ENCODE measurements at regions of chr16 and their contacts with region 1.

Region 1: DNA sequence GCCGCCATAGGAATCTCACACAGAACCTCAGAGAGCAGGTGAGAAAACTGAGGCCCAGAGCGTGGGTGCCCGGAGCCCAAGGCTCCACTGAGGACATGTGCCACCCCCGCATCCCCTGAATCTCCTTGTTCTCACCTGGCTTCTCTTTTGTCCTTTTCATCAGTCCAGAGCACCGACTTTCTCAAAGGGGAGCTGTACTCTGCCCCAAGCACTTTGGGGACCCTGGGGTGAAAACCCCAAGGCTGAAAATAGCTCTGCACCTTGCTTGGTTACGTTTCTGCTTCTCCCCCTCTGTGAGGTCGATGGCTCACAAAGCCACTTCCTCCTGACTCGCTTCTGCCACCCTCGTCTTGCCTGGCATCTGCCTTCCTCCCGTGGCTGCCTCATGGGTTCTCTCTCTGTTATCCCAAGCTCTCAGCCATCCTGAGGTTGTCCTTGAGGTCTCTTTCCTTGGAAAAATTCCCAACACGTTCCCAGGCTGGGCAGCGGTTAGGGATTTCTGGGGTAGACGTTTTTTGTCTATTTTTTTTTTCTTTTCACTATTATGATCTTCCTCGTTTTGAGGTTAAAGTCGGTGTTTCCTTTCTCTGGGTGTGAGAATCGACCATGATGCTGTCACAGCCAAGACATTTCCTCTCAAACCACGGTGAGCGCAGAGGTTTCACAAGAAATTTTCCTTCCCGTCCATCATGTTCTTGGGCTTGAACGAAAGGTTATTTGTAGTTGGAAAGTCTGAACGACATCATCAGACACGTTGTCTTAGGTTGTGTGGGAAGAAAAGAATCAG is 37.2 kb downstream of the IRF8 start:
- DNase-seq: peak; percentile 62
- H3K4me3 Mint-ChIP-seq: peak overlapping the region; percentile 8
- H3K27ac Mint-ChIP-seq: peak overlapping the region; percentile 90
- H3K4me1 Mint-ChIP-seq: peaks cover 55% of the 10 kb centered on the region
- H3K27me3 Mint-ChIP-seq: peaks cover 3% of the 10 kb centered on the region

Region 2: DNA sequence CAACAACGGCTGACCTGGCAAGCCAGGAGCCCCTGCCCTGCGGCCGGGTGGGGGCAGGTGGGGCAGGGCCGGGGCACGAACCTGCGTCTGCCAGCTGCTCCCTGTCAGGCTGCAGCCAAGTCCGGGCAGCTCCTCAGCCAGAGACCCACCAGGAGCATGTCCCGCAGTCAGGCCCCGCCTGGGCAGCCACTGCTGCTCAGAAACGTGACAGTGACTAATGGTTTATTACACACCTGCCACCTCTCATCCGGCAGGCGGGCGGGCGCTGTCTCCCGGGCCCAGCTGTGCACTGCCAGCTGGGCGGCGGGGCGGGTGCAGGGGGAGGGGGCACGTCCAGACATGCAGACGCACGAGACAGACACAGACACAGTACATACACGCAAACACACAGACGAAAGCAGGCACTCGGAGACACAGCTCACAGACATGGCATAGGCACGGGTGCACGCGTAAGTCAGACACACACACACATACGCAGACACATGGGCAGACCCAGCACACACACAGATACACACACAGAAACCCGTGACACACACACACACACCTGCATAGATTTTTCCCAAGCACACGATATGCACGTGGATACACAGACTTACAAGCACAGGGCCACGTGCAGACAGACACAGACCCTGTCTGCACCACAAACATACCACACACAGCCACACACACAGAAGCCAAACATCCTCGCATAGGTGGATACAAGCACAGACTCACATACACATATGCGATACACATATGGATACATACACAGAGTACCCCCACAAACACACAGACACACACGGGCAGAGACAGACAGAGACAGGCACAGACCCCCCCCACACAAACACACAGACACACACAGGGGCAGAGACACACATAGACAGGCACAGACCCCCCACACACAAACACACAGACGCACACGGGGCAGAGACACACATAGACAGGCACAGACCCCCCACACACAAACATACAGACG is 575.6 kb before region 1 on chr16:
- intact Hi-C with region 1: no loop called
- DNase-seq: no peak
- H3K4me3 Mint-ChIP-seq: no peak overlapping the region
- H3K27ac Mint-ChIP-seq: no peak overlapping the region
- H3K4me1 Mint-ChIP-seq: no peaks in the 10 kb centered on the region
- H3K27me3 Mint-ChIP-seq: no peaks in the 10 kb centered on the region

Region 3: DNA sequence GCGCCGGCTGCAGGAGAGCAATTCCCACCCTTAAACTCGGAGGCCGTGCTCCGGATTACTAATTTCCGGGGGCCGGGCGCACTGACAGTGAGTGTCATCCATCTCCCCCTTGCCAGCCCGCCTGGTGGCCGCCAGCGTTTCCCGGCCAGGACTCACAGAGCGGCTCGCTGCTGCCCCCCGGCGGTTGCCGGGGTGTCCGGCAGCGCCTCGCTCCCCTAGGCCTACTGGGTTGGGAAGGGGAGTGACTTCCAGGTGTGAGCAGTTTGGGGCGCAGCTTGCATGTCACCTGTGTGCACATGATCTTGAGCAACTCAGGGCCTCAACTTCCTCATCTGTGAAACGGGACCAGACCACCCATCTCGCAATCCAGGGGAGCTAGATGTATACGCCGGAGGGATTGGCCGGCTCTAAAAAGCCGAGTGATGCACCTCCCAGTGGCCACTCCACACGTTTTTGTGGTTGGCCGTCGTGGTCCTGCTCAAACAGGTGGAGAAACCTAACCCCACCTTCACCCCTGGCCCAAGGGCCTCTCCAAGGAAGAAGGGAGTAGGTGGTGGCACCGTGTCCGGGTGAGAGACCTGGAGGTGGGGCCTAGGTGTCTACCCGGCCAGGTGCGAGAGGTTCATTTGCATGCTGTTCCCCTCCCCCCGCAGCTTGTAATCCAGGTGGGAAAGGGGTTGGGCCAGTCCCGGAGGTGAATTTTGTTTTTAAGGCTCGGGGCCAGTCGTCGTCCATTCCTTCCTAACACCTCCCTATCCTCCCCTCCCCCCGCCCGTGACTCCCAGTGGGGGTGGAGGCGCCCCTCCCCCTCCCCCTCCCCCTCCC is 325.4 kb before region 1 on chr16:
- intact Hi-C with region 1: loop called (anchors 5 kb)
- DNase-seq: peak; percentile 75
- H3K4me3 Mint-ChIP-seq: peak overlapping the region; percentile 80
- H3K27ac Mint-ChIP-seq: peak overlapping the region; percentile 63
- H3K4me1 Mint-ChIP-seq: peaks cover 26% of the 10 kb centered on the region
- H3K27me3 Mint-ChIP-seq: peaks cover 13% of the 10 kb centered on the region

Region 4: DNA sequence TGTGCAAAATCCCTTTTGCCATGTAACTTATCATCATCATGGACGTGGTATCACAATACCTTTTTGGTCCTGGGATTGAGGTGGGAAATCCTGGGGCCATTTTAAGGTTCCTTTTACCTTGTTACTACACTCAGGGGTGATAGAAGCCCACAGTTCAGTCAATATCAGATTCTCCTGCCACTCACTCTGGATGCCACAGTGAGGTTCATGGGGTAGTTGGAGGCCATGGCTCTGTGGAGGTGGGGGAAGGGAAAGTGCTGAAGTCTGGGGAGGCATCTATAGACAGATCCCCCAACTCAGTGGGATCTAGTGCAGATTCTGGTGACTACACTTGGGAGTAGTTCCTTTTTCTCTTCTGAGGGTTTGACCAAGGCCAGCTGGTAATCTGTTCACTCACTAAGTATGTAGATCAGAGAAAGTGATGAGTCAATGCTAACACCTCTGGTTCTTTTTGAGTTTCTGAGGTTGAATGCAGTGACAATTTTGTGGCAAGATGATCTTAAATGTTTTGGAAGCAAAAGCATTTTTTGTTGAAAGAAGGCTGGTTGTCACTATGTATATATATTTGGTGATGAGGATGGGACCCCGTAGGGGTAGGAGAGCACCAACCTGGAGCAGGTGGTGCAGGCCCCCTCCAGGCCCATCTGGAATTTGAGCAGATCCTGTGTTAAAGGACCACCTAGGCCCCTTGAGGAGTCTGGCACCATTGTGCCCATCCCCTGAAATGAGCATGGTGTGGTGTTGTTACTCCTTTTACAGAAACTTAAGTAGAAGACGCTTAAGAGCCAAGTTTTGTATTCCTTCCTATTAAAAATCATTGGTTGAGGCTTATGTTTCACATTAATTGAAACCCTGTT is 56.0 kb before region 1 on chr16:
- intact Hi-C with region 1: loop called (anchors 1 kb)
- DNase-seq: no peak
- H3K4me3 Mint-ChIP-seq: no peak overlapping the region
- H3K27ac Mint-ChIP-seq: no peak overlapping the region
- H3K4me1 Mint-ChIP-seq: peaks cover 26% of the 10 kb centered on the region
- H3K27me3 Mint-ChIP-seq: peaks cover 53% of the 10 kb centered on the region

Region 5: DNA sequence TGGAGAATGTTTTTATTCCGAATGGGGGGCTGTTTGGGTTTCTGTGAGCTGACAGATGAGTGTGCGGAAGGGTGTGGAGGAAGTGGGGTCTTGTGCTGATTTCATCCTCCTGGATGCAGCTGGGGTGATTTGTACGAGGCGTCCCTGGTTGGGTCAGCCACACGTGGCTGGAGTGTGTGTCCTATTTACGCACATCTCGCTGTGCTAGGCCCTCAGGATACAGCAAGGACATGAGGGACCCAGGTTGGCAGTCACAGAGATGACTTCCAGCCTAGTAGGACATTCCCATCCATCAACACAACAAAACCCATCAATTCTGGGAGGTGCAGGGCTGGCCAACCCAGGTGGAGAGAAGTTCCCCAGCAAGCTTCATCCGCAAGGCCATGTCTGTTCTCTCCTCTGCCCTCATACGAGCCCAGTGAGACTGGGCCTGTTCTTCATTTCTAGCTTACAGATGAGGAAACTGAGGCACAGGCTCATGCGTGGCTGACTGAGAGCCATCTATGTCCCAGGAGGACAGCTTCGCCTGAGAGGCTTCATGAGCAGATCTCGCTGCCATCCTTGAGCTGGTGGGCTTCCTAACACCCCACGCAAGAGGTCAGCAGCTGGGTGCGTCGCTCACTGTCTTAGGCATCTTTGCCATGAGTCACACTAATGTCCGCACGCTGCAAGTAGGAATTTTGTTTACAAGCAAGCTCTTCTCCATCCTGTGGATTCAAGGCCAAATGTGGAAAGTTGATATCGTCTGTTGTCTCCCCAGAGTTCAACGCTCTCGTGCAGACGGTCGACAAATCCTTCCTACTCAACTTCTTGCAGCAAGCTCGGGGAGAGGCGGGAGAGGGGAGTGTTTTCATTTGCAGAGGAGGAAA is 12.8 kb before region 1 on chr16:
- intact Hi-C with region 1: loop called (anchors 1 kb)
- DNase-seq: no peak
- H3K4me3 Mint-ChIP-seq: no peak overlapping the region
- H3K27ac Mint-ChIP-seq: peak overlapping the region; percentile 8
- H3K4me1 Mint-ChIP-seq: peaks cover 33% of the 10 kb centered on the region
- H3K27me3 Mint-ChIP-seq: peaks cover 10% of the 10 kb centered on the region

Region 6: DNA sequence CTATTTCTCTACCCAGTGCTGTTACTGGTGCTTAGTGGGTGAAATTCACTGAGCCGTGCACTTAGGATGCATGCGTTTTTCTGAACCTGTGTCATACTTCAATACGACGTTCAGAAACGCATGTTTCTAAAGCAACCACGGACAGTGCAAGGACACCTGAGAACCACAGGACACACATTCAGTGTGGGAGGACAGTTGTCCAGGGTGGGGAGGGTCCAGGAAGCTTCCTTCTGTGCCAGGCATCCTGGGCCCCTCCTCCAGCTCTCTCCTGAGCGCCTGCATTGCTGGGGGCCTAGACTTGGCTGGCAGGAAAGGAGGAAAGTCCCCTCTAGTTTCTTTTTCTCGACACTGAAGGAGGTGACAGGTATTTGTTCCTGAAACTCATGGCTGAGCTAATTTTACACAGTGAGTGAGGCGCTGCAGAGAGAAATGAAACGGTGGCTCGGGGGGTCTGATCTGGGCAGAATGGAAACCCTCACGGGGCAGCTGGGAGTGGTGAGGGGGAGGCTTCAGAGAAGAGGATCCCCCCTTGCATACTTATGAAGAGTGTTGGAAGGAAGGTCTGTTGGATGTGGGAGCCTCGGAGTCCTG is 52.7 kb after region 1 on chr16:
- intact Hi-C with region 1: loop called (anchors 1 kb)
- DNase-seq: peak; percentile 6
- H3K4me3 Mint-ChIP-seq: peak overlapping the region; percentile 73
- H3K27ac Mint-ChIP-seq: peak overlapping the region; percentile 99
- H3K4me1 Mint-ChIP-seq: peaks cover 68% of the 10 kb centered on the region
- H3K27me3 Mint-ChIP-seq: peaks cover 1% of the 10 kb centered on the region

Region 7: DNA sequence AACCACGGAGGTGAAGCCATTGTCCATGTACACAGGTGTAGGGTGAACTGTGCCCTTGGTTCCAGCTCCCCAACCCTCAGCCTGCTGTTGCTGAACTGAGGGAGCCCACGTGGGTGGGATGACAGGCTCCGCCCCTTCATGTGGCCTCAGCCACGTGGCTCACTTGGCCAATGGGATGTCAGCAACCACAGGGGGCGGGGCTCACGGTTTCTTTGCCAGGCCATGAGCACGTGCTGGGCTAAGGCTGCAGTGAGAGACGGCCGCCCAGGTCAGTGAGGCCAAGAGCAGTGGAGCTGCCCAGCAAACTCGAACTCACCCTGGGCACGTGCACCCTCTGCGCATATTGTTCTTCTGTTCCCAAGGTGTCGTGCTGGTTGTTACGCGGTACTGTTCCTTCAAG is 245.4 kb after region 1 on chr16:
- intact Hi-C with region 1: no loop called
- DNase-seq: no peak
- H3K4me3 Mint-ChIP-seq: no peak overlapping the region
- H3K27ac Mint-ChIP-seq: no peak overlapping the region
- H3K4me1 Mint-ChIP-seq: no peaks in the 10 kb centered on the region
- H3K27me3 Mint-ChIP-seq: no peaks in the 10 kb centered on the region

Region 8: GRCh38 chr16:87877938-87878507 is 1941.9 kb after region 1 on chr16:
- intact Hi-C with region 1: no loop called
- DNase-seq: no peak
- H3K4me3 Mint-ChIP-seq: peak overlapping the region; percentile 45
- H3K27ac Mint-ChIP-seq: peak overlapping the region; percentile 79
- H3K4me1 Mint-ChIP-seq: peaks cover 47% of the 10 kb centered on the region
- H3K27me3 Mint-ChIP-seq: peaks cover 2% of the 10 kb centered on the region

Measured in activated T-helper 1 cell treated with anti-CD3 and anti-CD28 coated beads, Interleukin-12 subunit alpha, Interleukin-12 subunit beta, Interleukin-2, Interleukin-4 antibody, amounts not matched to agents 30 ng/mL and 10 ng/mL and 1 ng/mL, durations not matched to agents 14 hours and 24 hours and 36 hours (primary cell).